Activated CD4-positive, alpha-beta T cell treated with anti-CD3 and anti-CD28 coated beads for 36 hours (primary cell): ENCODE measurements at regions of chr18 and their contacts with region 1.

Region 1: GRCh38 chr18:58768293-58768974 is 96.2 kb upstream of the ZNF532 start:
- DNase-seq: peak; percentile 88
- ATAC-seq: peak; percentile 97
- H3K4me3 Mint-ChIP-seq: peak overlapping the region; percentile 38
- H3K27ac Mint-ChIP-seq: no peak overlapping the region
- H3K4me1 Mint-ChIP-seq: peaks cover 3% of the 10 kb centered on the region
- H3K27me3 Mint-ChIP-seq: peaks cover 34% of the 10 kb centered on the region

Region 2: DNA sequence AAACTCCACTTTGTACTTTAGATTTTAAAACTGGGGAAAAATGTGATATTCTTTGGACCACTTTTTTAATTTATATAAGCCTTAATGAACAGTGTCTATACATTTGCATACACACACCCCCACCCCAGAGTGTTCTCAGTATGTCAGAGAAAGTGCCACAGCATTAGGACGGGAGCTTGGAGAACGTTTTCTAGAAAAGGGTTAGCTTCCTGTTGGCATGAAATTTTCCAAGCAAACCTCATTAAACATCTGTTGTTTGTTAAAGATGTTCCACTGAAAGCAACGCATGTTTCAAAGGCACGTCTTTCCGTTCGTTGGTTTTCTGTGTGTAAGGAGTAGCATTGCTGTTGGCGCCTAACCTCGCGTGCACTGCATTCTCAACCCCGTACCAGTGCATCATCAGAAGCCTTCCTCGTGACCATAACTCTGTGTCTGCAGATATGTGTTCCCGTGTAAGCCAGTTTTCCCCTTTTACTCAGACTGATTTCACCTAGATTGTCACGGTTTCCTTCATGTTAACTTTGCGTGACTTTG is 368.0 kb before region 1 on chr18:
- CTCF ChIA-PET with region 1: interaction called, 9 read pairs
- POLR2A ChIA-PET with region 1: no interaction called
- intact Hi-C with region 1: loop called (anchors 1 to 2 kb)
- DNase-seq: peak; percentile 60
- ATAC-seq: peak; percentile 83
- H3K4me3 Mint-ChIP-seq: no peak overlapping the region
- H3K27ac Mint-ChIP-seq: peak overlapping the region; percentile 62
- H3K4me1 Mint-ChIP-seq: peaks cover 17% of the 10 kb centered on the region
- H3K27me3 Mint-ChIP-seq: no peaks in the 10 kb centered on the region

Region 3: DNA sequence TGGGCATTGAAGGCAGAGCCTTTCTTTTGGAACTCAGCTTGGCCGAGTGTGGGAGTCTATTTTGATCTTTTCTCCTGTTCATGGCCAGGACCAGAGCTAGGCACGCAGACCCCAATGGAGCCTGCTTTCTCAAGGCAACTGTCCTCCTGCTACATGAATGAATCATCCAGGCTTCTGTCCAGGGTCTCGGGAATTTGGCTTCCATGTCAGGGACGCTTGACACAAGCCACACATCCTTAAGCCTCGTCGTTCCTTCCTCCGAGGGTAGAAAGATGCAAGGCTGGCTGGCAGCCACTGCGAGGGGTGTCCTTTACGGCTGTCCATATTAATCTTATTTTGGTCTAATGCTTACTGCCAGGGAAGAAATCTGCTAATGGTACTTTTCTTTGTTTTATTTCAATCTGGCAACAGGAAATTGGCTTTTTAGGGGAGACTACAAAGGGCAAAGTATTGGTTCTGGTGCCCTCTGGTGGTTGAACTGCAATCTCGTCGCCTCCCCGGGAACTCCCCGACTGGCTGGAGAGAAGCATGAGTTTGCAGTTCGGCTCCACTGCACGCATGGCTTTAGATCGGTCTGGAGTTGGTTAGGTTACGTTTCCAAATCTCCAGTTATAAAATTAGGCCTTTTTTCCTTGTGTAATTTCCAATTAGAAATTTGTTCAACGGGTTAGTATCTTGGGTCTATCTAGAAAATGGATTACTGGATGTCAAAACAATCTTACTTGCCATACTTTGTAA is 274.7 kb before region 1 on chr18:
- CTCF ChIA-PET with region 1: interaction called, 43 read pairs
- POLR2A ChIA-PET with region 1: no interaction called
- intact Hi-C with region 1: loop called (anchors 1 kb)
- DNase-seq: peak; percentile 87
- ATAC-seq: peak; percentile 95
- H3K4me3 Mint-ChIP-seq: no peak overlapping the region
- H3K27ac Mint-ChIP-seq: no peak overlapping the region
- H3K4me1 Mint-ChIP-seq: peaks cover 9% of the 10 kb centered on the region
- H3K27me3 Mint-ChIP-seq: peaks cover 27% of the 10 kb centered on the region

Region 4: GRCh38 chr18:58515175-58515775 is 253.2 kb before region 1 on chr18:
- CTCF ChIA-PET with region 1: interaction called, 22 read pairs
- POLR2A ChIA-PET with region 1: no interaction called
- intact Hi-C with region 1: no loop called
- DNase-seq: no peak
- ATAC-seq: no peak
- H3K4me3 Mint-ChIP-seq: no peak overlapping the region
- H3K27ac Mint-ChIP-seq: no peak overlapping the region
- H3K4me1 Mint-ChIP-seq: no peaks in the 10 kb centered on the region
- H3K27me3 Mint-ChIP-seq: peaks cover 5% of the 10 kb centered on the region

Region 5: DNA sequence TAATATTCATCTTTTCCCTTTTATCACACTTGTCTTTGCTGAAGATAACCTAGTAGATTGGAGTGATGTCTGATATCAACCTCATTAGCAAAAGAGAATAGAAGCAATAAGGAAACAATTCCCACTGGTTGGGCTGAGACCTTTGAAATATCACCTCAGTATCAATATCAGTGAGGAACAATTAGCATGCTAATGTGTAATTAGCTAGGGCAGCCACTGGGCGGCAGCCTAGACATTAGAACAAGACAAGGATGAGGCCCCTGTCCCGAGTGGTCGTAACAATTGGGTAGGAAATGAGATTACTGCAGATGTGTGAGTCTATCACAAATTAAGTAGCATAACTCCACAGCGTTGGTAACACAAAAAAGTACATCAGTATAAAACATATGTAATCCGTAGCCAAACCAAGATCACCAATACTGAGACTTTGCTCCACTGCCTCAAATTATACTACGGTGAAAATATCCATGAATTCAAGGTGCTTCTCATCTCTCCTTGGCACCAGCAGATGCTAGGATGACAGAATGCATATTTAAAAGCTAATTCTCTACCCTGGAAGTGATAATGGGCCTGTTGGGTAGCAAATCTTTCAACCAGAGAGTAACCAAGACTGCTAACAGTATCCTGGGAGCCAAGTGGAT is 238.6 kb before region 1 on chr18:
- CTCF ChIA-PET with region 1: interaction called, 298 read pairs
- POLR2A ChIA-PET with region 1: no interaction called
- intact Hi-C with region 1: loop called (anchors 1 kb)
- DNase-seq: peak; percentile 83
- ATAC-seq: peak; percentile 39
- H3K4me3 Mint-ChIP-seq: no peak overlapping the region
- H3K27ac Mint-ChIP-seq: no peak overlapping the region
- H3K4me1 Mint-ChIP-seq: peaks cover 30% of the 10 kb centered on the region
- H3K27me3 Mint-ChIP-seq: peaks cover 13% of the 10 kb centered on the region

Region 6: GRCh38 chr18:58646334-58646862 is 122.0 kb before region 1 on chr18:
- CTCF ChIA-PET with region 1: no interaction called
- POLR2A ChIA-PET with region 1: no interaction called
- intact Hi-C with region 1: no loop called
- DNase-seq: no peak
- ATAC-seq: no peak
- H3K4me3 Mint-ChIP-seq: no peak overlapping the region
- H3K27ac Mint-ChIP-seq: no peak overlapping the region
- H3K4me1 Mint-ChIP-seq: peaks cover 29% of the 10 kb centered on the region
- H3K27me3 Mint-ChIP-seq: peaks cover 3% of the 10 kb centered on the region

Region 7: DNA sequence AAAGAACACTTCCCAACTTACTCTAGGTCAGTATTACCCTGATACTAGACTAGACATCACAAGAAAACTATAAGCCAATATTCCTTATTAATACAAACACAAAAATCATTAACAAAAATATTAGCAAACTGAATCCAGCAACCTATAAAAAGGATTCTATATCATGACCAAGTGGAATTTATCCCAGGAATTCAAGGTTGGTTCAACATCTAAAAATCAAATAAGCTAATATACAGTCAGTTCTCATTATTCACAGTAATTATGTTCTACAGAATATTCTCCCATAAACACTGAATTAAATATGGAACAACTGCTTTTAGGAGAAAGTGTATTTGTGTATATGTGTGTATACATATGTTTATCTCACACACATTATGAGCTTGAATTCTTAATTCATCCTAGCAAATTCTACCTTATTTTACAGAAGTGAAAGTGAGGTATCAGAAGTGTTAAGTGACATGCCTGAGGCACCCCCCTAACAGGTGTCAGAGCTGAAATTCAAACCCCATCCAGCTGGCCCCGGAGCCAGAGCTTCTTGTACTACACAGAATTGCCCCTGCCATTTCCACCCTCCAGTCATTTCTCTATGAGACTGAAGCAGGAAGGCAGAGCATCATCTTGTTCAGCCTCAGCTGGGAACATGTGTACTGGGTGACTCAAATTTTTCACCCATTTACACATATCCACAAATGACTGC is 19.4 kb before region 1 on chr18:
- CTCF ChIA-PET with region 1: interaction called, 36 read pairs
- POLR2A ChIA-PET with region 1: no interaction called
- intact Hi-C with region 1: no loop called
- DNase-seq: no peak
- ATAC-seq: peak; percentile 49
- H3K4me3 Mint-ChIP-seq: no peak overlapping the region
- H3K27ac Mint-ChIP-seq: no peak overlapping the region
- H3K4me1 Mint-ChIP-seq: no peaks in the 10 kb centered on the region
- H3K27me3 Mint-ChIP-seq: no peaks in the 10 kb centered on the region

Region 8: DNA sequence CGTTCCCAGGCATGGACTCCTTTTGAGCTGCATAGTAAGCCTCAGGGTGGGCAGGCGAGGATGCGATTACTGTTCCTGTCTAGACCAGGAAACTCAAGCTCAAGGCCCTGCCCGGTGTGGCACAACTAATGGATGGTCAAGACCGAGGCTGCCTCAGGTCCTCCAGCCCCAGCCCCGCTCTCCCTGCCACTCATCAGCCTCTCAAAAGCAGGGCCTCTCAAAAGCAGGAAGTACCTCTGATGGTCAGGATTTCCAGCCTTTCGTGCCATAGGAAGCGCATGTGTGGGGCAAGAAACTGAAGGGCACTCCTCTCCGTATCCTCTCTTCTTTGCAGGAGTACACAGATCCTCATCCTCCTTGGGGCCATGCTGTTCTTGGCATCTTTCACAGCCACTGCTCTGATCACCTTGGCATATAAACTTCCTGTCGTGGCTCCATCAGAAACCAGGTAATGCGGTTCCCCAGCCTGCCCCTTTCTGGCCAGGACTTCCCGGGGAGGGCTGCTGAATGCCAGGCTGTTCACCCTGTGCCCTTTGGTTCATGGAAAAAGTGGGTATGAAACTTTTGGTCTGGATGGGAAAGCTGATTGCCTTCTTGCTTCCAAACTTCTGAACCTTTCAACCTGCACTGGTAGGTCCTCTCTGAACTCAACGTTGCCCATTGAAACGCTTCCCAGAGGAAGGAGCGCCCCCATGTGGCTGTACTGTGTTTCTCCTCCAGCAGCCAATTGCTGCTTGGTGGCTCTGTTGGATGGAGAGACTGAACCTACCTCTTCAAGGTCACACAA is 288.5 kb after region 1 on chr18:
- CTCF ChIA-PET with region 1: interaction called, 5 read pairs
- POLR2A ChIA-PET with region 1: no interaction called
- intact Hi-C with region 1: loop called (anchors 1 kb)
- DNase-seq: peak; percentile 90
- ATAC-seq: peak; percentile 79
- H3K4me3 Mint-ChIP-seq: no peak overlapping the region
- H3K27ac Mint-ChIP-seq: no peak overlapping the region
- H3K4me1 Mint-ChIP-seq: peaks cover 2% of the 10 kb centered on the region
- H3K27me3 Mint-ChIP-seq: peaks cover 11% of the 10 kb centered on the region